ENCODE measurements at regions of chr1 and their contacts with region 1.

Region 1: GRCh38 chr1:3423245-3423829 is 31.1 kb upstream of the ARHGEF16 start:
- DNase-seq: no peak
- H3K4me3 ChIP-seq: no peak overlapping the region
- H3K27ac ChIP-seq: peak overlapping the region in 3 of 8 donors; percentile 14 to 31 (median 16)
- H3K4me1 ChIP-seq: peaks cover 0 to 21% (median 4%) of the 10 kb centered on the region in 6 donors
- H3K27me3 ChIP-seq: peaks cover 0 to 57% (median 0%) of the 10 kb centered on the region in 7 donors
- CTCF ChIP-seq: no peak
- POLR2A ChIP-seq: no peak

Region 2: GRCh38 chr1:2821966-2822620 is 601.2 kb before region 1 on chr1:
- intact Hi-C with region 1: loop called (anchors 5 kb)
- DNase-seq: no peak
- H3K4me3 ChIP-seq: no peak overlapping the region
- H3K27ac ChIP-seq: no peak overlapping the region
- H3K4me1 ChIP-seq: peaks cover 0 to 7% (median 0%) of the 10 kb centered on the region in 6 donors
- H3K27me3 ChIP-seq: peaks cover 0 to 63% (median 8%) of the 10 kb centered on the region in 7 donors
- CTCF ChIP-seq: peak in 10 of 11 experiments; percentile 25 to 77 (median 62)
- POLR2A ChIP-seq: no peak

Region 3: DNA sequence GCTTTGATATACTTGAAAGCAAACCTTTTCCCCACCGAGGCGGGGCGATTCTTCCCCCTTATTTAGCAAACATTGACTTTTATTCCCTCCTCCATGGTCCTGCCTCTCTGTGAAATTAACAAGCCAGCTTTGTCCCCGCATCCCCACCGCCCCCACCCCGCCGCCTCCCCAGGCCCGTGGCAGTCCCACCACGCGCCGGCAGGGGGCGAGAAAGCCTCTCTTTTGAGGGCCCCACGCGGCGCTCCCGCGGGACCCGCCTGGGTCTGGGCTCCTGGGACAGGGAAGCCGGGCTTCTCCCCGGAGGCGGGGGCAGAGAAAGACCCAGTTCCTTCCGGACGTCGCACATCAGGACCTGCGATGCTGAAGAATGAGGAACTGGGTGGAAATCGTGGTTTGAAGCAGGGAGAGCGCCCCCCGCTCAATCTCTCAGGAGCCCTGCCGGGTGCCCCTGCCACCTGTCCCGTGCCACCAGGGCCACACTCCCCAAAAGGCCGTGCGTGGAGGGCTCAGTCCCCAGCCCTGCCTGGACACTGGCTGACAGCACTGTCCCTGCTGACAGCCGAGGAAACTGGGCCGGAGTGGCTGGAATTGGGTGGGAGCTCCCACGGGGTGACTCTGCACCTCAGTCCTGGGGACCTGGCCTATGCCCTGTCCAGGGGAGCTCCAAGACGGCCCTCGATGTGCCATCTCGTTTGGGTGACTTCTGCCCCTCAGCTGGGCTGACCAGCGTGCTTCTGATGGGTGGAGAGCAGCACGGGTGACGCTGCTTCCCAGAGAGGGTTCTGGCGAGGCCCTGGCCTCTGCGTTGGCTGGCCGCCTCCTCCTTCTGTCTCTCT is 410.7 kb before region 1 on chr1:
- intact Hi-C with region 1: loop called (anchors 5 kb)
- DNase-seq: peak; percentile 80
- H3K4me3 ChIP-seq: no peak overlapping the region
- H3K27ac ChIP-seq: no peak overlapping the region
- H3K4me1 ChIP-seq: peaks cover 0 to 13% (median 9%) of the 10 kb centered on the region in 6 donors
- H3K27me3 ChIP-seq: peaks cover 0 to 79% (median 21%) of the 10 kb centered on the region in 7 donors
- CTCF ChIP-seq: peak in 10 of 11 experiments; percentile 18 to 92 (median 84)
- POLR2A ChIP-seq: no peak

Region 4: GRCh38 chr1:3656450-3657095 is 233.2 kb after region 1 on chr1:
- intact Hi-C with region 1: no loop called
- DNase-seq: peak; percentile 36
- H3K4me3 ChIP-seq: no peak overlapping the region
- H3K27ac ChIP-seq: no peak overlapping the region
- H3K4me1 ChIP-seq: peaks cover 6 to 19% (median 17%) of the 10 kb centered on the region in 6 donors
- H3K27me3 ChIP-seq: peaks cover 3 to 77% (median 36%) of the 10 kb centered on the region in 7 donors
- CTCF ChIP-seq: no peak
- POLR2A ChIP-seq: no peak

Measured in spleen (tissue), 13 donors.